ENCODE measurements at regions of chr11 and their contacts with region 1.

Region 1: GRCh38 chr11:66371627-66372415 is at the start of gene SLC29A2:
- DNase-seq: peak; percentile 89
- ATAC-seq: peak; percentile 87
- H3K4me3 Mint-ChIP-seq: peak within 1 kb of the TSS; percentile 86
- H3K27ac Mint-ChIP-seq: peak within 1 kb of the TSS; percentile 96
- H3K4me1 Mint-ChIP-seq: peaks cover 14% of the 10 kb centered on the region
- H3K27me3 Mint-ChIP-seq: peaks cover 5% of the 10 kb centered on the region
- total RNA-seq, gene SLC29A2: 11.2 to 12.1 TPM

Region 2: DNA sequence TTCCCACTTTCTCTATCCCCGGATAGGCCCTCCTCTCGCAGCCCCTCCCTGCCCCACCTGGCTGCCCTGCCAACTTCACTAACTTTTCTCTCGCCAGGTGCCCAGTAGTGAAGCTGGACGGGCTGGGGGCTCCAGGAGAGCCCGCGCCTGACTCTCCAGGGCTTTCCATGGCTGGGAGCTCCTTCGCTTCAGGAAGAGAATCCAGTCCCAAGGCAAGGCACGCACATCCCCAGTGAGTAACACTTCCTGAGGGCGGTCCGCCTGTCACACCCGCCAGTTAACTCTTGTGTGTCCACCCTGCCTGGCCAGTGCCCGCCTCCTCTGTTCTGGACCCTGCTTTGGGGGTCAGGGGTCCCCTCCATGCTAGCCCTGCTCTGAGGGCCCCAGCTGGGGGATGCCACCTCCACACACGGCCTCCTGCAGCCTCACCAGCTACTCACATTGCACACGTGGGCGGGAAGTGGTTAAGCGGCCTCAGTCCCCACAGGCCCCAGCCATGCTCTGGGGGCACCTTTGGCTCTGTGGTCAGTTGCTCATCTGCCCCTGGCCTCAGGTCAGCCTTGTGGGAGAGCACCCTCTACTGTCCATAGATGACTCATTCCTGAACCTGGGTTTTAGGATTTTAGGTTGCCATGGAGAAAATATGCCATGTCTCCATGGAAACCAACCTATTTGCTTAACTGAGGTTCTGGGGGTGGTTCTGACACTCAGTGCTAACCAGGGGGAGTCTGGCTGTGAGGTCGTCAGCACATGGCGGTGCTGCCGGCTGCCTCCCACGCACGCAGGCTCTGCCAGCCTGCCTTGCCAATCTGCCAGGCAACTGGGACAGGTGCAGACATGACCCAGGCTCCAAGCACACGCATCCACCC is 35.4 kb before region 1 on chr11 and contains the start of gene RIN1:
- POLR2A ChIA-PET with region 1: interaction called, 10 read pairs
- DNase-seq: peak; percentile 77
- ATAC-seq: peak; percentile 76
- H3K4me3 Mint-ChIP-seq: peak within 1 kb of the TSS; percentile 70
- H3K27ac Mint-ChIP-seq: peak within 1 kb of the TSS; percentile 79
- H3K4me1 Mint-ChIP-seq: peaks cover 26% of the 10 kb centered on the region
- H3K27me3 Mint-ChIP-seq: no peaks in the 10 kb centered on the region
- total RNA-seq, gene RIN1: 3.0 to 5.7 TPM

Region 3: DNA sequence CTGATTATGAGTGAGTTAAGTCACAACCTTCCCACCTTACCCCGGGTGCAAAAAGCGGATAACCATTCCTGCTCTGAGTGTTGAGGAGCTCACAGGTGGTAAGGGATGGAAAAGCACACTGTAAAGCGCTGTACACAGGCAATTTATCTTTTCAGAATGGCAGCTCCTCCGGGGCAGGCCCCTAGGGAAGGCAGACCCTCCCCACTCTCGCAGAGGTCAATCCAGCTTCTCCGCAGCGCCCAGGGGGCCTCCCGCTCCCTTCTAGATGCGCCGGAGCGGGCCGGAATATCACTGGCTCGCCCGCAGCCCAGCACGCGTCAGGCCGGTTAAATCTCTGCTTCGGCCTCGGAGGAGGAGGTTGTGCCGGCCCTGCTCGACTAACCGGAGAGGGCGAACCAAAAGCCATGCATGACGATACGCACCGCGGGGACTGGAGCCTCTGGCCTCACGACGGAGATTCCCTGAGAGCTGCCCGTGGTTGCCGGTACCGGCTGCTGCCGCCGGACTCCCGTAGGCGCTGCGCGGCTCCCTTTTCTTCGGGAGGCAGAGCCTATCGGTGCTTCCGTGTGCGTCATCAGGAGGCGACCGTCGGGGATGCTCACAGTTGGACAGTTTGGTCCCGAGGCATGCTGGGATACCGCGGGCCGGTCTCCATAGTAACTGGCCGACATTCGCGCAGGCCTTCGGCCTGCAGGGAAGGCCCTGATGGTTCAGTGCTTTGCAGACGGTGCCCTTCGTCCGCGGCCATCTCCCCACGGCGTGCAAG is 27.1 kb before region 1 on chr11 and contains the start of gene BRMS1:
- POLR2A ChIA-PET with region 1: interaction called, 25 read pairs
- DNase-seq: peak; percentile 94
- ATAC-seq: peak; percentile 76
- H3K4me3 Mint-ChIP-seq: peak within 1 kb of the TSS; percentile 90
- H3K27ac Mint-ChIP-seq: peak within 1 kb of the TSS; percentile 91
- H3K4me1 Mint-ChIP-seq: peaks cover 35% of the 10 kb centered on the region
- H3K27me3 Mint-ChIP-seq: peaks cover 2% of the 10 kb centered on the region
- total RNA-seq, gene BRMS1: 45.4 to 47.8 TPM

Region 4: DNA sequence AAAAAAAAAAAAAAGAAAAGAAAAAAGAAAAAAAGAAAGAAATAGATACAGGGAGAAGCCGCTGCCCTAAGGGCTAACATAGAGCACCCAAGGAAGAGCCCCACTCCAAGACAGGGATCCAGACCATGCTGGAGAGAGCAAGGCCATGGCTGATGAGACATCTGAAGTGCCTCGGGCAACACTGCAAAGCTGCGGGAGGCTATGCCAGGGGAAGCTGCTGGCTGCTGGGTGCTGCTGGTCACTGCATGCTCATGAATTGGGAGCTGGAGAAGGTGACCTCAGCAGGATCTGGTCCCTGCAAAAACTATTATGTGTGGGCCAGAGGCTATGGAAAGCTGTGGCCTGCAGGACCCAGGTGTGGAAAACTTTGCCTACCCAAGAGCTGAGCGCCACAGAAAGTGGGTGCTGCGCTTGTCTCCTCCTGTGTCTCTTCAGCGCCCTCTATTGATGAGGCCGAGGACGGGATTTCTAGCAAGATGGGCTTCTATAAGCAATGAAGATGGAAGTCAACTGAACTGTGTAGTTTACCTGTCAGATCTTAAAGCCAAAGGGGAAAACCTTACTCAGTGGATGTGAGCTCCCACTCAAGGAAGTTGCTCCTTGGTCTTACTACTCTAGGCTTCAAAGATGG is 17.1 kb after region 1 on chr11:
- POLR2A ChIA-PET with region 1: interaction called, 12 read pairs
- DNase-seq: peak; percentile 68
- ATAC-seq: peak; percentile 82
- H3K4me3 Mint-ChIP-seq: no peak overlapping the region
- H3K27ac Mint-ChIP-seq: no peak overlapping the region
- H3K4me1 Mint-ChIP-seq: peaks cover 11% of the 10 kb centered on the region
- H3K27me3 Mint-ChIP-seq: peaks cover 13% of the 10 kb centered on the region